ENCODE measurements at regions of chr3 and their contacts with region 1.

Region 1: GRCh38 chr3:189975391-189975990 is 145.2 kb downstream of the P3H2 start:
- DNase-seq: no peak
- H3K4me3 ChIP-seq: no peak overlapping the region
- H3K27ac ChIP-seq: no peak overlapping the region
- H3K4me1 ChIP-seq: no peaks in the 10 kb centered on the region
- H3K27me3 ChIP-seq: no peaks in the 10 kb centered on the region
- CTCF ChIP-seq: no peak
- POLR2A ChIP-seq: no peak

Region 2: DNA sequence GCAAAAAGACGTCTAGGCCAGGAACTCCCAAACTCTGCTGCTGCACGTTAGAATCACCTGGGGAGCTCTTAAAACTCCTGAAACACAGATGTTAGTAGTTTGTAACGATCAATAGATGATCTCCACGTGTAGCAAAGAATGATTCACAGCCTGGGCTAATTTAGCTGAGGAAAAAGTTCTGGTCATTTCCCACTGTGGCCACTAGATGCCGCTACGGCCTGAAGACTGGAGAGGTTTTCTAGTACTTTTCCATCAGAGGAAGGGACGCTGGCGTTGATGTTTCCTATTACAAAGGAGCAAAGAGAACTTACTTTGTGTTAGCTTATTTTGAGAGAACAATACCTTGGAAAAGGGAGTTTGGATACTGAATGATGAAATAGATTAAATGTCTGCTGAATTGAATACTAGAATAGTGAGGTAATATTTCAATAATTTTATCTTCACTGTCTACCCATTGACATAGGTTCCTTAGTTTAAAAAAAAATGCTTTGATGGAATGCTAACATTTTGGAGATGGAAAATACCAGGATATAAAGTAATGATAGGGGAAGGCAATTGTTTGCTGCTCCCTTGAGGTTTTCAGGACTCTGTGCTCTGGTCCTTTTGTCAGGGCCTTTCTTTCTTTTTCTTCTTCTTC is 13.8 kb before region 1 on chr3:
- intact Hi-C with region 1: no loop called
- DNase-seq: no peak
- H3K4me3 ChIP-seq: no peak overlapping the region
- H3K27ac ChIP-seq: no peak overlapping the region
- H3K4me1 ChIP-seq: peaks cover 7% of the 10 kb centered on the region
- H3K27me3 ChIP-seq: no peaks in the 10 kb centered on the region
- CTCF ChIP-seq: peak; percentile 60 to 97 (median 91)
- POLR2A ChIP-seq: no peak

Region 3: GRCh38 chr3:190321789-190322603 is 346.5 kb after region 1 on chr3 and contains the start of gene CLDN1:
- intact Hi-C with region 1: loop called (anchors 10 kb)
- DNase-seq: no peak
- H3K4me3 ChIP-seq: peak within 1 kb of the TSS; percentile 49 to 61
- H3K27ac ChIP-seq: no peak within 1 kb of the TSS
- H3K4me1 ChIP-seq: peaks cover 21% of the 10 kb centered on the region
- H3K27me3 ChIP-seq: no peaks in the 10 kb centered on the region
- CTCF ChIP-seq: peak; percentile 54 to 84 (median 76)
- POLR2A ChIP-seq: no peak
- total RNA-seq, gene CLDN1: 48.6 TPM